Activated CD8-positive, alpha-beta T cell treated with anti-CD3 and anti-CD28 coated beads, Interleukin-2, amount 10 ng/mL, durations not matched to agents 7 days and 5 days (primary cell): ENCODE measurements at regions of chr6 and their contacts with region 1.

Region 1: GRCh38 chr6:26054857-26055669 is 32.2 kb upstream of the HFE start:
- DNase-seq: peak; percentile 95
- ATAC-seq: peak; percentile 72
- H3K4me3 Mint-ChIP-seq: peak overlapping the region; percentile 87
- H3K27ac Mint-ChIP-seq: peak overlapping the region; percentile 100
- H3K4me1 Mint-ChIP-seq: peaks cover 36% of the 10 kb centered on the region
- H3K27me3 Mint-ChIP-seq: no peaks in the 10 kb centered on the region

Region 2: DNA sequence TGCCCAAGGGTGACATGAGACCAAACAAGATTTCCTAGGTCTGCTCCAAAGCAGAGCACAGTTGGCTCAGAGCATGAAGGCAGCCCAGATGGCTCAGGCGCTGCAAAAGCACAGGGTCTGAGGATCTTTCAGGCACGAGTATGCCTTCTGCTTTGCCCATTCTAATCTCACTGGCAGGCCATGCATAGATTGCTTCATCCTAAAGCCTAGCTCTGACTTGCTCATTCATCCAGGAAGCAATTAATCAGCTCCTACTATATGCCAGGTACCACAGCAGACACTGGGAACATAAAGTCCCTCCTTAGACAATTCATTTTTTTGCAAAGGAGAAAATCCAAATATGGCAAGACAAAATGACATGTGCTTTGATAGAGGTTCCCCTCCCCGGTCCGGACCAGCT is 1596.9 kb before region 1 on chr6:
- CTCF ChIA-PET with region 1: no interaction called
- POLR2A ChIA-PET with region 1: no interaction called
- DNase-seq: no peak
- ATAC-seq: no peak
- H3K4me3 Mint-ChIP-seq: no peak overlapping the region
- H3K27ac Mint-ChIP-seq: no peak overlapping the region
- H3K4me1 Mint-ChIP-seq: no peaks in the 10 kb centered on the region
- H3K27me3 Mint-ChIP-seq: no peaks in the 10 kb centered on the region

Region 3: DNA sequence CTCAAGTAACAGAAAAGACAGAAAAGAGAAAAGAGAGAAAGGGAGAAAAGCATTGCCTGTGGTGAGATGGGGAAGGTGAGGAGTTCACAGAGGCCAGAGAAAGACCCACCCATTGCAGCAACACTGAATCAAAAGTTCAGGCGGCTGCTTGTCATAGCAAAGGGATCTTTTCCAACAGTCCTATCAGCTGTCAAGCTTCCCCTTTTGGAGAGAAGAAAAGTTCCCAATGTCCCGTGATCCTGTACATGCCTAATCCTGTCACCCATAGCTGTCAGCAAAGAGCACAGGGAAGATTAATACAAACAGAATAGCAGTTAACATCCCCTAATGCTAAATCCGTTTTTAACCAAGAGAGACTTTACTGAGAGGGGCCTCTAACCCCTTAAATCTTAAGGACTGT is 101.3 kb before region 1 on chr6:
- CTCF ChIA-PET with region 1: no interaction called
- POLR2A ChIA-PET with region 1: no interaction called
- DNase-seq: no peak
- ATAC-seq: no peak
- H3K4me3 Mint-ChIP-seq: no peak overlapping the region
- H3K27ac Mint-ChIP-seq: no peak overlapping the region
- H3K4me1 Mint-ChIP-seq: peaks cover 10% of the 10 kb centered on the region
- H3K27me3 Mint-ChIP-seq: peaks cover 7% of the 10 kb centered on the region

Region 4: DNA sequence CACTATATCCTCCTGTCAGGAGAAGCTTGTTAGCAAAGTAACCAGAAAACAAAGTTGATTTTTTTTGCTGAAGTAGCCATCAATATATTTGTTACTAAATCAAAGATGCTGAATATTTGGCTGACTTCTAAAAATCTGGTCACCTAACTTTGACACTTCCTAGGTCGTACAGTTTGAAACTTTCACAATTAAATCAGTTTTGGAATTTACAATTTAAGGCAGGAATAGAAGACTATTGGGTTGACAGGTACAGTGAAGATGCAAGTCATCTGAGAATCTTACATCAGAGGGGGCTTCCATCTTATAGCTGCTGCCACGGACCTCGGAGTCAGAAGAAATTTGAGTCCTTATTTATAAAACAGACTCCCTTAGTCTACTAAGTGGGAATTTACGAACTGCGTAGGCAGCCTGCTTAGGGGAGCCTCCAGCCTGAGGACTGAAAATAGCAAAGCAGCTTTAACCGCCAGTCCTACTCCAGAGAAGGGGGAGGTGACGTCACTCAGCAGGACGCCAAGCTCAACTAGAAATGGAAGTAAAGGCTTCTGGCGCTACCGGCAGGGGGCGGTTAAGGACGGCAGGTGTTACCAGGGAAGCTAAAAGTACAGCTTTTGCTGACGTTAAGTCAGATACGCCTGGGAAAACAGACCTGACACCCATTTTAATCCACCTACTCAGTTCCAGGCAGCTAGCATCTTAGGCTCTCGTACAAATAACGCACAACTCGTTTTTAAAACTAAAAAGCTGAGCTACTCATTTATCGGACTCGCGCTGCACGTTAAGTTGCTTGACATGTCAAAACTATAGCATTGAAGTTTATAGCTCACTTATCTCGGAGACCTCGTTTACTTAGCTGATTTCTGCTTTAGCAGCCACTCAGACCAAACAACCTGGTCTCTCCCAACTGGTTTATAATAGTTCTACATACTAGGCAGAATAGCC is 28.9 kb before region 1 on chr6:
- CTCF ChIA-PET with region 1: interaction called, 10 read pairs
- POLR2A ChIA-PET with region 1: interaction called, 1,951 read pairs
- DNase-seq: peak; percentile 97
- ATAC-seq: peak; percentile 42
- H3K4me3 Mint-ChIP-seq: peak overlapping the region; percentile 86
- H3K27ac Mint-ChIP-seq: peak overlapping the region; percentile 99
- H3K4me1 Mint-ChIP-seq: peaks cover 86% of the 10 kb centered on the region
- H3K27me3 Mint-ChIP-seq: peaks cover 3% of the 10 kb centered on the region

Region 5: GRCh38 chr6:26087284-26088115 is 32.4 kb after region 1 on chr6 and contains the start of gene HFE:
- CTCF ChIA-PET with region 1: interaction called, 741 read pairs
- POLR2A ChIA-PET with region 1: interaction called, 29 read pairs
- DNase-seq: peak; percentile 50
- ATAC-seq: peak; percentile 48
- H3K4me3 Mint-ChIP-seq: peak within 1 kb of the TSS; percentile 80
- H3K27ac Mint-ChIP-seq: peak within 1 kb of the TSS; percentile 70
- H3K4me1 Mint-ChIP-seq: peaks cover 60% of the 10 kb centered on the region
- H3K27me3 Mint-ChIP-seq: peaks cover 1% of the 10 kb centered on the region
- total RNA-seq, gene HFE: 4.3 TPM

Region 6: DNA sequence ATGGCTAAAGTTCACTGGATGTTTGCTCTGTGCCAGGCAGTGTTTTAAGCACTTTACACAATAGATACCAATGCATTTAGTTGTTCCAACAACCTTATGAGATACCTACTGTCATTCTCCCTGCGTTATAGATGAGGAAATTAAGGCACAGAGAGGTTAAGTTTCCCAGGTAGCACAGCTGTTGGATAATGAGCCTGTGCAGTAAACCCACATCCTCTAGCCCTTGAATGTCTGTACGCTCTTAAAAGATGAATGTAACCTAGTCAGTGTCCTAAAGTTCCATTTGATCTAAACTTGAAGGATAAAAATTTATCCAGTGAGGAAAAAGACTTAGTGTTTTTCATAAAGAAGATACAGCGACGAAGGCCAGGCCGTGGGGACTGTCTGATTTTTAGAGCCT is 60.2 kb after region 1 on chr6:
- CTCF ChIA-PET with region 1: no interaction called
- POLR2A ChIA-PET with region 1: interaction called, 31 read pairs
- DNase-seq: no peak
- ATAC-seq: peak; percentile 46
- H3K4me3 Mint-ChIP-seq: no peak overlapping the region
- H3K27ac Mint-ChIP-seq: peak overlapping the region; percentile 62
- H3K4me1 Mint-ChIP-seq: peaks cover 24% of the 10 kb centered on the region
- H3K27me3 Mint-ChIP-seq: no peaks in the 10 kb centered on the region

Region 7: GRCh38 chr6:26204332-26205165 is 149.5 kb after region 1 on chr6:
- CTCF ChIA-PET with region 1: no interaction called
- POLR2A ChIA-PET with region 1: interaction called, 114 read pairs
- DNase-seq: peak; percentile 95
- ATAC-seq: peak; percentile 66
- H3K4me3 Mint-ChIP-seq: no peak overlapping the region
- H3K27ac Mint-ChIP-seq: no peak overlapping the region
- H3K4me1 Mint-ChIP-seq: peaks cover 41% of the 10 kb centered on the region
- H3K27me3 Mint-ChIP-seq: no peaks in the 10 kb centered on the region

Region 8: DNA sequence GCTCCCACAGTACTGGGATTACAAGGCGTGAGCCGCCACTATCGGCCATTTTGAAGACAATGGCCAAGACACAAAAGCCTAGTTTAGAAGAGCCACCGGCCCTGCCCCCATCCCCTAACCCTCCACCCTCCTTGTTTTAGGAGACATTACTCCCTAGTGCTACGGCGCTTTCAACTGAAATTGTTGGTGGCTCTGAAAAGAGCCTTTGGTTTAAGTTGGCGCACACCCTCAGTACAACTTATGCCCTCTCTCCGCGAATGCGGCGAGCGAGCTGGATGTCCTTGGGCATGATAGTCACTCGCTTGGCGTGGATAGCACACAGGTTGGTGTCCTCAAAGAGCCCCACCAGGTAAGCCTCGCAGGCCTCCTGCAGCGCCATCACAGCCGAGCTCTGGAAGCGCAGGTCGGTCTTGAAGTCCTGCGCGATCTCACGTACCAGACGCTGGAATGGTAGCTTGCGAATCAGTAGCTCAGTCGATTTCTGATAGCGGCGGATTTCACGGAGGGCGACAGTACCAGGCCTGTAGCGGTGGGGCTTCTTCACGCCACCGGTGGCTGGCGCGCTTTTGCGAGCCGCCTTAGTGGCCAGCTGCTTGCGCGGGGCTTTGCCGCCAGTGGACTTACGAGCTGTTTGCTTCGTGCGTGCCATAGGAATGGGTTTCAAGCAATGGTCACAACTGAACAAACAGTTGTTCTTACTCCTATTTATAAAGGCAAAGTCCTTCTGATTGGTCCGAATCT is 195.1 kb after region 1 on chr6:
- CTCF ChIA-PET with region 1: no interaction called
- POLR2A ChIA-PET with region 1: interaction called, 25 read pairs
- DNase-seq: peak; percentile 85
- ATAC-seq: peak; percentile 55
- H3K4me3 Mint-ChIP-seq: peak overlapping the region; percentile 84
- H3K27ac Mint-ChIP-seq: peak overlapping the region; percentile 100
- H3K4me1 Mint-ChIP-seq: peaks cover 30% of the 10 kb centered on the region
- H3K27me3 Mint-ChIP-seq: no peaks in the 10 kb centered on the region

Region 9: GRCh38 chr6:26568601-26569432 is 513.8 kb after region 1 on chr6:
- CTCF ChIA-PET with region 1: no interaction called
- POLR2A ChIA-PET with region 1: no interaction called
- DNase-seq: peak; percentile 97
- ATAC-seq: peak; percentile 88
- H3K4me3 Mint-ChIP-seq: peak overlapping the region; percentile 95
- H3K27ac Mint-ChIP-seq: peak overlapping the region; percentile 86
- H3K4me1 Mint-ChIP-seq: peaks cover 41% of the 10 kb centered on the region
- H3K27me3 Mint-ChIP-seq: no peaks in the 10 kb centered on the region